ENCODE measurements at regions of chr4 and their contacts with region 1.

Region 1: DNA sequence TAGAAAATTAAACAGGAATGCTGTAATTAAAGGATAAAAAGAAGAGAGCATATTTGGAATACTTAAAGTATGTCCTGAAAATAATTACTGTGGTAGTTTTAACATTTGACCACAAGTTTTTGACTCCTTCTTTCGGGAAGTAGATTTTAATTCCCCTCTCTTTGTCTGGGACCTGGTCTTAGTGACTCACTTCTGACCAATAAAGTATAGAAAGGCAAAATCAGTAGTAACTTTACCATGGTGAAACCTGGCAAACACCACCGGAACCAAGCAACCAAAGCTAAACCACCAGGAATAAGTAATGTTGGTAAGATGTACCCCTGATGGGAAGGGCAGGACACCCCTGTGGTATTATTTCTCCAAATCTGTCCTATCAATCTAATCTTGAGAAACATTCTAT is 314.8 kb downstream of the PDHA2 start:
- DNase-seq: no peak
- ATAC-seq: no peak
- H3K4me3 ChIP-seq: no peak overlapping the region
- H3K27ac ChIP-seq: no peak overlapping the region
- H3K4me1 ChIP-seq: no peaks in the 10 kb centered on the region
- H3K27me3 ChIP-seq: no peaks in the 10 kb centered on the region
- CTCF ChIP-seq: no peak

Region 2: GRCh38 chr4:95701500-95702170 is 453.0 kb before region 1 on chr4:
- CTCF ChIA-PET with region 1: no interaction called
- POLR2A ChIA-PET with region 1: no interaction called
- intact Hi-C with region 1: loop called (anchors 2 kb)
- DNase-seq: peak; percentile 46
- ATAC-seq: peak; percentile 81
- H3K4me3 ChIP-seq: no peak overlapping the region
- H3K27ac ChIP-seq: no peak overlapping the region; the same call in 1 of the 2 replicates
- H3K4me1 ChIP-seq: peaks cover 12% of the 10 kb centered on the region
- H3K27me3 ChIP-seq: no peaks in the 10 kb centered on the region
- CTCF ChIP-seq: no peak

Region 3: GRCh38 chr4:96052827-96053226 is 101.8 kb before region 1 on chr4:
- CTCF ChIA-PET with region 1: no interaction called
- POLR2A ChIA-PET with region 1: no interaction called
- intact Hi-C with region 1: no loop called
- DNase-seq: no peak
- ATAC-seq: no peak
- H3K4me3 ChIP-seq: no peak overlapping the region
- H3K27ac ChIP-seq: no peak overlapping the region
- H3K4me1 ChIP-seq: no peaks in the 10 kb centered on the region
- H3K27me3 ChIP-seq: no peaks in the 10 kb centered on the region
- CTCF ChIP-seq: no peak

Region 4: GRCh38 chr4:96175871-96176270 is 21.2 kb after region 1 on chr4:
- CTCF ChIA-PET with region 1: no interaction called
- POLR2A ChIA-PET with region 1: no interaction called
- intact Hi-C with region 1: no loop called
- DNase-seq: no peak
- ATAC-seq: no peak
- H3K4me3 ChIP-seq: no peak overlapping the region
- H3K27ac ChIP-seq: no peak overlapping the region
- H3K4me1 ChIP-seq: no peaks in the 10 kb centered on the region
- H3K27me3 ChIP-seq: no peaks in the 10 kb centered on the region
- CTCF ChIP-seq: no peak

Region 5: DNA sequence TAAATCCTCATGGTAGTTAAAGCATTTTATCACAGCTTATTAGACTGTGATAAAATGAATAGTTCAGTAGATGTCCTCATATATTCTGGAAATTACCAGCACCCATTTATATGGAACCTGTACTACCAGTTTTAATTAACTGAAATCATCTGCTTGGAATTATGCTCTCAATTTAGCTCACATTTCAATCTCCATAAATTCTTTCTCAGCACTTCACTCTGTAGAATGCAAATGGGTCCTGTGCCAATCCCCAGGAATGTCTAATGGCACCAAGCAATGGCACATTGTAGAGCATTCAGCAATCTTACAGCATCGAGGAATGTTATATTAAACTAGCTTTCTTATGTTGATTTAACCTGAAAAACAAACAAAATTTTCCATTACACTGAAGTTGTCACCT is 40.3 kb after region 1 on chr4:
- CTCF ChIA-PET with region 1: no interaction called
- POLR2A ChIA-PET with region 1: no interaction called
- intact Hi-C with region 1: no loop called
- DNase-seq: no peak
- ATAC-seq: no peak
- H3K4me3 ChIP-seq: no peak overlapping the region
- H3K27ac ChIP-seq: no peak overlapping the region
- H3K4me1 ChIP-seq: no peaks in the 10 kb centered on the region
- H3K27me3 ChIP-seq: no peaks in the 10 kb centered on the region
- CTCF ChIP-seq: no peak

Measured in PC-3 (cell line).